Right ventricle myocardium superior (tissue), 1 donor: ENCODE measurements at regions of chr3 and their contacts with region 1.

Region 1: DNA sequence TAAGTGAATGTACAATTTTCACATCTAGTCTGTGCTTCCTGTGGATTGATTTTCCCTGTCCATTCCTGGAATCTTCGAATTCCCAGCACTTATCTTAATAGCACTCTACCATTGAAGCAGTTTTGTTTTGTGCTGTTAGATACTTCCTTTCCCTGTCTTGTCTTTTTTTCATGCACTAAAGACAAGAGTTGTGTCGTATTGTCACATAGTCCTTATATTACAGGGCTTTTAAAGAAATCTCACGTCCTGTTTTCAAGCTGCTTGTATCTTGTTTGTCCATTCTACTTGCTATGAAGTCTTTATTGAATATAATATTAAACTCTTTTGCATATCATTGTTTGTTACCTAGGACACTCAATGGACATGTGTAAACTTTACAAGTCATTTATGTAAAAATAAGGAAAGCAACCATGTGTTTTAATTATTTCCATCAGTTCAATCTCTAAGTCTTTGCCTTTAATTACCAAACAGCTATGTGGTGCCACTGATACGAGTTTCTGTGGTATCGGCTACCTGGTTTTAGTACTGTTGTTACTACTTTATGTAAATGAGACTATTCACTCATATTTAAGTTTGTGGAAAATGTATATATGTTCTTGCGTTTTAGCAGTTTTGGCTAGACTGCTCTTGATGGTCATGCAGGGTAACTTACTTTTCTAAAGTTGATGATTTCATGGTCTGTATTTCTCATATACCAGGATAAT is 10.3 kb downstream of the PIK3CA start:
- DNase-seq: no peak
- ATAC-seq: no peak

Region 2: GRCh38 chr3:179046497-179047353 is 111.8 kb before region 1 on chr3:
- intact Hi-C with region 1: no loop called
- DNase-seq: no peak
- ATAC-seq: no peak

Region 3: DNA sequence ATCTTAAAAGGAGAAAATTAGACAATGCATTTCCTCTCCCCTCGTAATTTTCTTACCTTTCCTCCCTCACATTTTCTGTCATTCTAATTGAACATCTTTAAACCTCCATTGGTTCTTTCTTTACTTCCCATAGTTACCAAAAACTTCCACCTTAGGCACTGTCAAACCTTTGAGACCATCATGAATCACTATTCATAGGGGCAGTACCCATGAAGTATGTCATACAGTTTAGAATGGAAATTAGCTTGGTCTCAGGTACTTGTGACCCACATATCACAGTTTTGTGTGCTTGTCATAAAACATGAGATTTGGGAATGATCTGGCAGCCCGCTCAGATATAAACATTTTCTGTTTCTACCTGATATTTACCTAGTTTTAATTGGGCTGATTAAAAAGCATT is 42.3 kb after region 1 on chr3:
- intact Hi-C with region 1: loop called (anchors 10 kb)
- DNase-seq: no peak
- ATAC-seq: no peak

Region 4: DNA sequence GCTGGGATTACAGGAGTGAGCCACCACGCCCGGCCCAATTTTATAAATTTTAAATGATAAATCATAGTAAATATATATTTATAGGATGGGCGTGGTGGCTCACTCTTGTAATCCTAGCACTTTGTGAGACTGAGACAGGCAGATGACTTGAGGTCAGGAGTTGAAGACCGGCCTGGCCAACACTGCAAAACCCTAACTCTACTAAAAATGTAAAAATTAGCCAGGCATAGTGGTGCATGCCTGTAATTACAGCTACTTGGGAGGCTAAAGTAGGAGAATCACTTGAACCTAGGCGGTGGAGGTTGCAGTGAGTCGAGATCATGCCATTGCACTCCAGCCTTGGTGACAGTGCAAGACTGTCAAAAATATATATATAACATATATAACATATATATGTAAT is 215.4 kb after region 1 on chr3:
- intact Hi-C with region 1: no loop called
- DNase-seq: no peak
- ATAC-seq: no peak